Activated CD4-positive, alpha-beta T cell treated with anti-CD3 and anti-CD28 coated beads, Interleukin-2, amount 10 ng/mL, durations not matched to agents 24 days and 14 days (primary cell): ENCODE measurements at regions of chr22 and their contacts with region 1.

Region 1: GRCh38 chr22:36377022-36377631 is 10.6 kb downstream of the MYH9 start:
- DNase-seq: peak; percentile 88
- H3K4me3 Mint-ChIP-seq: peak overlapping the region; percentile 88
- H3K27ac Mint-ChIP-seq: peak overlapping the region; percentile 98
- H3K4me1 Mint-ChIP-seq: peaks cover 81% of the 10 kb centered on the region
- H3K27me3 Mint-ChIP-seq: no peaks in the 10 kb centered on the region

Region 2: GRCh38 chr22:36331306-36331911 is 45.7 kb before region 1 on chr22:
- intact Hi-C with region 1: loop called (anchors 2 kb)
- DNase-seq: peak; percentile 94
- H3K4me3 Mint-ChIP-seq: peak overlapping the region; percentile 88
- H3K27ac Mint-ChIP-seq: peak overlapping the region; percentile 99
- H3K4me1 Mint-ChIP-seq: peaks cover 92% of the 10 kb centered on the region
- H3K27me3 Mint-ChIP-seq: no peaks in the 10 kb centered on the region

Region 3: GRCh38 chr22:36339171-36340065 is 37.7 kb before region 1 on chr22:
- intact Hi-C with region 1: loop called (anchors 1 kb)
- DNase-seq: peak; percentile 79
- H3K4me3 Mint-ChIP-seq: peak overlapping the region; percentile 57
- H3K27ac Mint-ChIP-seq: peak overlapping the region; percentile 89
- H3K4me1 Mint-ChIP-seq: peaks cover 82% of the 10 kb centered on the region
- H3K27me3 Mint-ChIP-seq: no peaks in the 10 kb centered on the region

Region 4: GRCh38 chr22:36356708-36357694 is 20.1 kb before region 1 on chr22:
- intact Hi-C with region 1: loop called (anchors 1 kb)
- DNase-seq: peak; percentile 78
- H3K4me3 Mint-ChIP-seq: peak overlapping the region; percentile 67
- H3K27ac Mint-ChIP-seq: peak overlapping the region; percentile 85
- H3K4me1 Mint-ChIP-seq: peaks cover 74% of the 10 kb centered on the region
- H3K27me3 Mint-ChIP-seq: no peaks in the 10 kb centered on the region

Region 5: GRCh38 chr22:36365020-36365411 is 12.1 kb before region 1 on chr22:
- intact Hi-C with region 1: loop called (anchors 1 kb)
- DNase-seq: peak; percentile 95
- H3K4me3 Mint-ChIP-seq: peak overlapping the region; percentile 79
- H3K27ac Mint-ChIP-seq: peak overlapping the region; percentile 89
- H3K4me1 Mint-ChIP-seq: peaks cover 83% of the 10 kb centered on the region
- H3K27me3 Mint-ChIP-seq: no peaks in the 10 kb centered on the region